ENCODE measurements at regions of chr17 and their contacts with region 1.

Region 1: GRCh38 chr17:48830840-48831548 is at the start of gene CALCOCO2:
- DNase-seq: peak; percentile 85
- H3K4me3 Mint-ChIP-seq: peak within 1 kb of the TSS; percentile 93
- H3K27ac Mint-ChIP-seq: peak within 1 kb of the TSS; percentile 97
- H3K4me1 Mint-ChIP-seq: peaks cover 50% of the 10 kb centered on the region
- H3K27me3 Mint-ChIP-seq: peaks cover 12% of the 10 kb centered on the region
- total RNA-seq, gene CALCOCO2: 50.3 and 57.9 TPM in 2 replicates

Region 2: DNA sequence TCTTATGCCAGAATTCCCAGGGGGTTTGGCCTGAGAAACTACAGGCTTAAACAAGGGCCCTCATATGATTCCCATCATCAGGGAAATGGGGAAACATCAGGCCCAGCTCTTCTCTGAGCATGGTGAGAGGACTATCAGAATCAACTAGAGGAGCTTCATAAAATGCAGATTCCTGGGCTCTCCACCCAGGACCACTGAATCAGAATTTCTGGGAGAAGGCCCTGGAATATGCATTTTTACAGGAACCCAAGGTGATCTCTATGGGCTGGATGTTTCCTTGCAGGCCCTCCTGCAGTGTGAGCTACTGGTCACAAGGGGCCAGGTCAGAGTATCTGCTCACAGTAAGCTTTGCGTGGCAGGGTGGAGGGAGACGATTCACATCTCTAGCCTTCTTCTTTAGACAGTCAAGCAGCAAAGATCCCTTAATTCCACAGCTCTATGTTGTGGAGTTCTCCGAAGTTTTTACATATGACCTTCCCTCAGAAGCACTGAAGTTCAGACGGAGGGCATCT is 63.7 kb before region 1 on chr17:
- intact Hi-C with region 1: no loop called
- DNase-seq: no peak
- H3K4me3 Mint-ChIP-seq: no peak overlapping the region
- H3K27ac Mint-ChIP-seq: no peak overlapping the region
- H3K4me1 Mint-ChIP-seq: peaks cover 5% of the 10 kb centered on the region
- H3K27me3 Mint-ChIP-seq: peaks cover 49% of the 10 kb centered on the region

Region 3: GRCh38 chr17:48816774-48817590 is 14.0 kb before region 1 on chr17 and contains the start of gene TTLL6:
- intact Hi-C with region 1: loop called (anchors 1 kb)
- DNase-seq: peak; percentile 81
- H3K4me3 Mint-ChIP-seq: peak within 1 kb of the TSS; percentile 81
- H3K27ac Mint-ChIP-seq: no peak within 1 kb of the TSS
- H3K4me1 Mint-ChIP-seq: peaks cover 18% of the 10 kb centered on the region
- H3K27me3 Mint-ChIP-seq: peaks cover 65% of the 10 kb centered on the region
- total RNA-seq, gene TTLL6: not detected in 2 replicates

Region 4: DNA sequence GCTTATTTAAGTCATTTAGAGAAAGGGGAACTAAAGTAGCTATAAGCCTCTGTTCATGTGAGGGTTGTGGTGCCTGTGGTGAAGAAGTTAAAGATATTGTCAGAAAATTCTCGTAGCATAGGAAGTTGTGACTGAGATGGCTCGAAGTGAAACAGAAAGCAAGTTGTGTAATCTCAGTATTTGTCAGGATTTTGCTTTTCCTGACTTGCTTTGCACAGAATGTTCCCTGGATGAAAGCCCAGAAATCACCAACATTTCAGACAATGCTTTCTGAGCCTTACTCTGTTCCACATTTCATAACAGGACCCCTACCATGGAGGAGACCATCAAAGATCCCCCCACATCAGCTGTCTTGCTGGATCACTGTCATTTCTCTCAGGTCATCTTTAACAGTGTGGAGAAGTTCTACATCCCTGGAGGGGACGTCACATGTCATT is 10.4 kb after region 1 on chr17:
- intact Hi-C with region 1: loop called (anchors 1 kb)
- DNase-seq: peak; percentile 54
- H3K4me3 Mint-ChIP-seq: peak overlapping the region; percentile 66
- H3K27ac Mint-ChIP-seq: peak overlapping the region; percentile 9
- H3K4me1 Mint-ChIP-seq: peaks cover 54% of the 10 kb centered on the region
- H3K27me3 Mint-ChIP-seq: peaks cover 2% of the 10 kb centered on the region

Region 5: GRCh38 chr17:48908047-48908843 is 77.3 kb after region 1 on chr17 and contains the start of gene UBE2Z:
- intact Hi-C with region 1: loop called (anchors 2 kb)
- DNase-seq: peak; percentile 81
- H3K4me3 Mint-ChIP-seq: peak within 1 kb of the TSS; percentile 93
- H3K27ac Mint-ChIP-seq: peak within 1 kb of the TSS; percentile 97
- H3K4me1 Mint-ChIP-seq: peaks cover 43% of the 10 kb centered on the region
- H3K27me3 Mint-ChIP-seq: no peaks in the 10 kb centered on the region
- total RNA-seq, gene UBE2Z: 88.8 and 91.5 TPM in 2 replicates